ENCODE measurements at regions of chr17 and their contacts with region 1.

Region 1: DNA sequence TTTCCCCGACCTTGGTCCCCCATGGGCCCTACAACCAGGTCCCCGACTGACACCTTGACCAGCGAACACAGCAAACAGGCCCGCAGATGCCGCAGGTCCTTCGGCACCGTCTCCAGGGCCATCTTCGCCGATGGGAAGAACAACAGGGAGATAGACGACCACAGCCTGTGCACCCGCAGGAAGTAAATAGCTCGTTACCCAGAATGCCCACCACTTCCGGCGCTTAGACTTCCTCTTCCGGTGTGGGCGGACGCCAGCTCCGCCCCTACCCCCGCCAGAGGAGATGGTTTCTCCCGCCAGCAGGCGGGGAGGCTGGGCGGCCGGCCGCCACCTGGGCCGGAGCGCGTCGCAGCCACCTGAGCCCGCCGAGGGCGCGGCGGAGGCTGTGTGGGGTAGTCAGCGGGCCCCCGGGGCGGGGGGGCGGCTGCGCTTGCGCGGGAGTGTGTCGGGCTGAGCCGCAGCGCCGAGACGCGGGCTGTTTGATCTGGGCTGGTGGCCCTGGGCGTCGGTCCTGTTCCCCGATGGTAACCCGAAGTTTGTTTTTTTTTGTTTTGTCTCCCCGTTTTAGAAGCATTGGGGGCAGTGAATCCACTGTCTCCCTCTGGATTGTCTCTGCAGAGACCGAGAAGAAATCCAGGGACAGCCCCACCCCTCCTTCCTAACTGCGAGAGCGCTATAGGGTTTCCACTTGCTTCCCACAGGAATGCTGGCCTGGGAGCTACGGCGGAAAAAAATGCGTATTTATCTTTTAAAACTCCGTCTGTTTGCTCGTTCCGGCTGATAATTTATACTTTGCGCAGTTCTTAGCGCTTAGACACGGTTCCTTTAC is at the start of gene SUPT4H1:
- DNase-seq: peak; percentile 95
- H3K4me3 ChIP-seq: peak within 1 kb of the TSS; percentile 80 to 96 (median 88)
- H3K27ac ChIP-seq: peak within 1 kb of the TSS; percentile 86
- H3K4me1 ChIP-seq: peaks cover 14% of the 10 kb centered on the region
- H3K27me3 ChIP-seq: no peaks in the 10 kb centered on the region
- CTCF ChIP-seq: peak in 1 of 2 donors; percentile 1
- total RNA-seq, gene SUPT4H1: 32.3 to 55.3 TPM

Region 2: DNA sequence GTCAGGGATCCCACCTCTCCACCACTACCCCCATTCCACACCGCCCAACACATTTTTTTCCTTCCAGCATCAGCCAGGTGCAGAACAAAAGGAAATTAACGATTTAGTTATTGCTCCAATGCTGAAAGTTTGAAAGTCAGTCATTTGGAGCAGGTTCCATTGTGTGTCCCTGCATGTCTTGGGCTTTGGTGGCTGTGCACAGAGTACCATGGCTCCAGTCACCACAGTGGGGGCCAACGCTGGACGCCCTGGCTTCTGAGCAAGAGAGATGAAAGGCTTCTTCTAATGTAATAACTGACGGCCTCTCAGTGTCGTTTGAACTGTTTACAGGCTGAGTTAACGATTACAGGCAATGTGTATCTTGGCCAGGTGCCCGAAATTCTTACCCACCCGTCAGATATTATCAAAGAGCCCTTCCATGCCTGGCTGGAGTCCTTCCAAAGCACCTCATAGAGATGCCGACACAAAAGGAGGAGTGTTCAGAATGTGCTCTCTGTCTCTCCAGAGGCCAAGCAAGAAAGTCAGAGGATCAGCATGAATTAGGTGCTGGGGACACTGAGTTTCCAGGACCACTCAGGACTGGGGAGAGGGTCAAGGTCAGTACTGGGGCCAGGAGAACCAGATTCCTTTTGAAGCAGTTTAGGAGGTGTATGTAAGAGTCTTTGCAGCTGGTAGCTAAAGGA is 39.2 kb after region 1 on chr17:
- CTCF ChIA-PET with region 1: no interaction called
- dilution Hi-C with region 1: no loop called
- in situ Hi-C with region 1: no loop called
- intact Hi-C with region 1: no loop called
- DNase-seq: peak; percentile 91
- H3K4me3 ChIP-seq: no peak overlapping the region
- H3K27ac ChIP-seq: no peak overlapping the region
- H3K4me1 ChIP-seq: peaks cover 29% of the 10 kb centered on the region
- H3K27me3 ChIP-seq: no peaks in the 10 kb centered on the region
- CTCF ChIP-seq: no peak

Region 3: GRCh38 chr17:58402047-58402446 is 49.8 kb after region 1 on chr17:
- CTCF ChIA-PET with region 1: no interaction called
- dilution Hi-C with region 1: no loop called
- in situ Hi-C with region 1: no loop called
- intact Hi-C with region 1: loop called (anchors 1 kb)
- DNase-seq: peak; percentile 72
- H3K4me3 ChIP-seq: peak overlapping the region in 1 of 3 experiments; percentile 3
- H3K27ac ChIP-seq: peak overlapping the region; percentile 96
- H3K4me1 ChIP-seq: peaks cover 55% of the 10 kb centered on the region
- H3K27me3 ChIP-seq: no peaks in the 10 kb centered on the region
- CTCF ChIP-seq: no peak

Region 4: GRCh38 chr17:58476812-58477211 is 124.6 kb after region 1 on chr17:
- CTCF ChIA-PET with region 1: interaction called, 21 read pairs
- dilution Hi-C with region 1: no loop called
- in situ Hi-C with region 1: no loop called
- intact Hi-C with region 1: no loop called
- DNase-seq: no peak
- H3K4me3 ChIP-seq: no peak overlapping the region
- H3K27ac ChIP-seq: no peak overlapping the region
- H3K4me1 ChIP-seq: no peaks in the 10 kb centered on the region
- H3K27me3 ChIP-seq: no peaks in the 10 kb centered on the region
- CTCF ChIP-seq: no peak

Measured in mammary epithelial cell (primary cell).